Activated T-helper 2 cell treated with anti-CD3 and anti-CD28 coated beads, Interferon-gamma antibody, Interleukin-2, Interleukin-4, amounts not matched to agents 10 μg/mL and 5 μg/mL and 100 μg/mL, durations not matched to agents 14 hours and 24 hours and 36 hours (primary cell): ENCODE measurements at regions of chr19 and their contacts with region 1.

Region 1: DNA sequence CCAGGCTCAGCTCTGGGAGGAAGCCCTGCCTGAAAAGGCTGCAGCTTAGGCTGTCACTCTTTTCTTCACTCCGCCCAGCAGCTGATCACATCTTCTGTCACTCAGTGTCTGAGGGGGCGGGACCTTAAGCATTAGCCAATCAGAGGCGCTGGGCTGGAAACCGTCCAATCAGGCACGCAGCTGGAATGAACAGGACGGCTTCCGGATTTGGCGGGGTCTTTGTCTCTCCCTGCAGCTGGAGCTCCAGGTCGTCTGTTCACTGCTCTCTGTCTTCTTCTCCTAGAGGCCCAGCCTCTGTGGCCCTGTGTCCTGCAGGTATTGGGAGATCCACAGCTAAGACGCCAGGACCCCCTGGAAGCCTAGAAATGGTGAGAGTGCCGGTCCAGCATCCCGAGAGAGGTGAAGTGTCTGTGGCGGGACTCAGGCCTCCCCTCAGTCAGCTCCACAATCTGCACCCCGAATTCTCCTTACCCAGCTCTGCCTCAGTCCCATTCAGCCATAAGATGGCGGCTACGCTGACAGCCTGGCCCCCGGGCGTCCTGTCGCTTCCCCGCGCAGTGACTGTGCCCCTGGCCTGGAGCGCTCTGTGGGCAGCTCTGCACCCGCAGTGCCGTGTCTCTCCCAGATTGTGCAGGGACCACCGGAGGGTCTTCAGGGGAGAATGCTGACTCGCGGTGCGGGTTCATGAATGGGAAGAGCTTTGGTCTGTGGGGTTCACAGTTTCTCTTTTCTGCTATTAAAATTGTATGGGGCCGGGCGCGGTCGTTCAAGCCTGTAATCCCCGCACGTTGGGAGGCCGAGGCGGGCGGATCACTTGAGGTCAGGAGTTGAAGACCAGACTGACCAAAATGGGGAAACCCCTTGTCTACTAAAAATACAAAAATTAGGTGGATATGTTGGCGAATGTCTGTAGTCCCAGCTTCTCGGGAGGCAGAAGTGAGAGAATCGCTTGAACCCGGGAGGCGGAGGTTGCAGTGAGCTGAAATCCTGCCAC is at the start of gene ZNF66:
- DNase-seq: peak; percentile 93
- H3K4me3 Mint-ChIP-seq: peak within 1 kb of the TSS; percentile 94
- H3K27ac Mint-ChIP-seq: peak within 1 kb of the TSS; percentile 93
- H3K4me1 Mint-ChIP-seq: peaks cover 1% of the 10 kb centered on the region
- H3K27me3 Mint-ChIP-seq: no peaks in the 10 kb centered on the region
- total RNA-seq, gene ZNF66: 8.1 and 8.8 TPM in 2 replicates

Region 2: DNA sequence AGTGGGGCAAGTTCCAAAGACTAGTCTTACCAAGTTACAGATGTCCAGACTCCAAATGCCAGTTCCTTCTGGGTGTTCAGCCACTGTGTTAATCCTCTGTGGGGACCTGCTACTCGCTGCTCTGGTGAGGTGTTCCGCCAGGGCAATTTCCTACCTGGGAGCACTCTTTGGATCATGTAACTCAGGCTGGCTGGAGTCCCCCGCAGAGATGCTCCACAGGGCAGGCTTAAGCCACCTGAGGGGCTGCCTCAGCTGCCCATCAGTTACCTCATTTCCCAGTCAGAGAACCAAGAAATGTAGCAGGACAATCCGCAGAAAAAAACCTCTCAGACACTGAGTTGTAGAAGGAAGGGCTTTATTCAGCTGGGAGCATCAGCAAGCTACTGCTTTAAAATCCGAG is 344.6 kb before region 1 on chr19:
- intact Hi-C with region 1: no loop called
- DNase-seq: no peak
- H3K4me3 Mint-ChIP-seq: no peak overlapping the region
- H3K27ac Mint-ChIP-seq: no peak overlapping the region
- H3K4me1 Mint-ChIP-seq: no peaks in the 10 kb centered on the region
- H3K27me3 Mint-ChIP-seq: no peaks in the 10 kb centered on the region

Region 3: GRCh38 chr19:20661150-20661819 is 115.1 kb before region 1 on chr19 and contains the start of gene ZNF626:
- intact Hi-C with region 1: loop called (anchors 2 kb)
- DNase-seq: peak; percentile 68
- H3K4me3 Mint-ChIP-seq: peak within 1 kb of the TSS; percentile 84
- H3K27ac Mint-ChIP-seq: peak within 1 kb of the TSS; percentile 79
- H3K4me1 Mint-ChIP-seq: no peaks in the 10 kb centered on the region
- H3K27me3 Mint-ChIP-seq: no peaks in the 10 kb centered on the region
- total RNA-seq, gene ZNF626: 1.3 and 2.1 TPM in 2 replicates

Region 4: DNA sequence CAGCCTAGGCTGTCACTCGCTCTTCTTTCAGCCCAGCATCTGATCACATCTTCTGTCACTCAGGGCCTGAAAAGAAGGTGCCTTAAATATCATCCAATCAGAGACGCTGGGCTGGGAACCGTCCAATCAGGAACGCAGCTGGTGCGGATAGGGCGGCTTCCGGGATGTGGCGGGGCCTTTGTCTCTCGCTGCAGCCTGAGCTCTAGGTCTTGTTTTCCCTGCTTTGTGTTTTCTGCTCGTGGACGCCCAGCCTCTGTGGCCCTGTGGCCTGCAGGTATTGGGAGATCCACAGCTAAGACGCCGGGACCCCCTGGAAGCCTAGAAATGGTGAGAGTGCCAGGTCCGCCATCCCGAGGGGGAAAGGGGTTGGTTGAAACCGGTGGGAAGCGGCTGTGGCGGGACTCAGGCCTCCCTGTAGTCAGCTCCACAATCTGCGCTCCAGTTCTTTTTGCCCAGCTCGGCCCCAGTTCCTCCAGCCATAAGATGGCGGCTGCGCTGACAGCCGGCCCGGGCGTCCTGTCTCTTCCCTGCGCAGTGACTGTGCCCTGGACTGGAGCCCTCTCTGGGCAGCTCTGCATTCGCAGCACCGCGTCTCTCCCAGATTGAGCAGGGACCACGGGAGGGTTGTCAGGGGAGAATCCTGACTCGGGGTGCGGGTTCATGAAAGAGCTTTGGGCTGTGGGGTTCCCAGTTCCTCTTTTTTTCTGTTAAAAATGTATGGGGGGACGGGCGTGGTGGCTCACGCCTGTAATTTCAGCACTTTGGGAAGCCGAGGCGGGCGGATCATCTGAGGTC is 146.9 kb after region 1 on chr19 and contains the start of gene ZNF85:
- intact Hi-C with region 1: loop called (anchors 2 kb)
- DNase-seq: peak; percentile 87
- H3K4me3 Mint-ChIP-seq: peak within 1 kb of the TSS; percentile 95
- H3K27ac Mint-ChIP-seq: peak within 1 kb of the TSS; percentile 96
- H3K4me1 Mint-ChIP-seq: peaks cover 6% of the 10 kb centered on the region
- H3K27me3 Mint-ChIP-seq: no peaks in the 10 kb centered on the region
- total RNA-seq, gene ZNF85: 8.2 and 10.1 TPM in 2 replicates

Region 5: DNA sequence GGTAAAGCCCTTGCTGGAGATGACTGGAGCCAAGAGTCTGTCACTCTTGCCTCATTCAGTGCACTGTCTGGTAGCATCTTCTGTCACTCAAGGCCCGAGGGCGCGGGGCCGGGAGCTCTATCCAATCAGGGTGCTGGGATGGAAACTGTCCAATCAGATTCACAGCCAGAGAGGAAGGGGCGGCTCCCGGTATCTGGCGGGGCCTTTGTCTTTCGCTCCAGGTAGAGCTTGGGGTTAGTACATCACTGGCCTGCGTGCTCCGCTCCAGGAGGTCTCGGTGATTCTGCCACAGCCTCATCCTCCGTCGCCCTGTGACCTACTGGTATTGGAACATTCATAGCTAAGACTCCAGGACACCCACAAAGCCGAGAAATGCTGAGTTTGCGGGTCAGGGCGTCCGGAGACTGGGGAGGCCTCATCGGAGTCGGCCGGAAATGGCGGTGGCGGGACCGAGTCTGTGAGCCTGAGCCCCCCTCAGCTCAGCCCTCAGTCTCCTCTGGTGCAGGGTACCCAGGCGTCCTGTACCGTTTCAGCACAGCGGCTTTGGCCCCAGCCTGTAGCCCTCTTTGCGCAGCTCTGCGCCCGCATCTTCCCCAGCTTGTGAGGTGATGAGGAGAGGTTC is 223.5 kb after region 1 on chr19:
- intact Hi-C with region 1: loop called (anchors 1 kb)
- DNase-seq: peak; percentile 81
- H3K4me3 Mint-ChIP-seq: peak overlapping the region; percentile 89
- H3K27ac Mint-ChIP-seq: peak overlapping the region; percentile 76
- H3K4me1 Mint-ChIP-seq: peaks cover 8% of the 10 kb centered on the region
- H3K27me3 Mint-ChIP-seq: no peaks in the 10 kb centered on the region

Region 6: DNA sequence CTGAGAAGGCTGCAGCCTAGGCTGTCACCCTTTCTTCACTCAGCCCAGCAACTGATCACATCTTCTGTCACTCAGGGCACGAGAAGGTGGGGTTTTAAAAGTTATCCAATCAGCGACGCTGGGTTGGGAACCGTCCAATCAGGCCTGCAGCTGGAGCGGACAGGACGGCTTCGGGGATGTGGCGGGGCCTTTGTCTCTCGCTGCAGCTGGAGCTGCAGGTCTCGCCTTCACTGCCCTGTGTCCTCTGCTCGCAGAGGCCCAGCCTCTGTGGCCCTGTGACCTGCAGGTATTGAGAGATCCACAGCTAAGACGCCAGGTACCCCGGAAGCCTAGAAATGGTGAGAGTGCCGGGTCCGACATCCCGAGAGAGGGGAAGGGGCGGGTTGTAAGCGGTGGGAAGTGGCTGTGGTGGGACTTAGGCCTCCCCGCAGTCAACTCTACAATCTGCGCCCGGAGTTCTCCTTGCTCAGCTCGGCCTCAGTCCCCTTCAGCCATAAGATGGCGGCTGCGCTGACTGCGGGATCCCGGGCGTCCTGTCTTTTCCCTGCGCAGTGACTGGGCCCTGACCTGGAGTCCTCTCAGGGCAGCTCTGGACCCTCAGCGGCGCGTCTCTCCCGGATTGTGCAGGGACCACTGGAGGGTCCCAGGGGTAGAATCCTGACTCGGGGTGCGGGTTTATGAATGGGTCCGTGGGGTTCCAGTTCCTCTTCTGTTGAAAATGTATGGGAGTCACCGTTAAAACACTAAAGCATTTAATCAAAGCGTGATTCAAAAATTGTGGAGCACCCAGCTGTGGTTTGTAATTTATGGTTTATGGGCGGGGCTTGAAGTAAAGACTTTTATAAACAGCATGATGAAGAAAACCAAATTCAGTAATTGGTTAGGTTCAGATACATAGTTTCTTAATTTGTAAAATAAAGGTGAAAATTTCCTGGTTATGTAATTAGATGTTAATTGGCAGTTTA is 305.9 kb after region 1 on chr19 and contains the start of gene ZNF714:
- intact Hi-C with region 1: loop called (anchors 1 kb)
- DNase-seq: peak; percentile 86
- H3K4me3 Mint-ChIP-seq: peak within 1 kb of the TSS; percentile 97
- H3K27ac Mint-ChIP-seq: peak within 1 kb of the TSS; percentile 97
- H3K4me1 Mint-ChIP-seq: peaks cover 27% of the 10 kb centered on the region
- H3K27me3 Mint-ChIP-seq: no peaks in the 10 kb centered on the region
- total RNA-seq, gene ZNF714: 20.1 and 21.4 TPM in 2 replicates

Region 7: DNA sequence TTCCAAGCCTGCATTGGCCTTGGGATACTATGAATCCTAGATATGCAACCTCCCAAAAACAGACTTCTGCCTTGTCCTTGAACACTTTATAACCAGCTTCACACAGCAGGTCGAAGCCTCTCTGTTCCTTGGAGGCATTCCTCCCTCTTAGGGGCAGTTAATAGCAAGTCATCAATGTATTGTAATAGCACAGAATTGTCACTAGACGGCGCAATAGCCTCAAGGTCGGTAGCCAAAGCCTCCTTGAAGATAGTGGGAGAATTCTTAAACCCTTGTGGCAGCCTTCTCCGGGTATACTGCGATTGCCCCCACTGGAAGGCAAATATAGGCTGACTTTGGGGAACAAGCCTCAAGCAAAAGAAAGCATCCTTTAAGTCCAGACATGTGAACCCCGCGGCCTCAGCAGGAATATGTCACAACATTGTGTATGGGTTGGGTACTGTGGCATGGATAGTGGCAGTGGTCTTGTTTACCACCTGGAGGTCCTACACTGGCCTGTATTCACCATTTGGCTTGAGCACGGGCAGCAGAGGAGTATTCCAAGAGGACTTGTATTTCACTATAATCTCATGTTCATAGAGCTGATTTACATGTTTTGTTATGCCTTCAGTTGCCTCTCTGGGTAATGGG is 426.6 kb after region 1 on chr19:
- intact Hi-C with region 1: no loop called
- DNase-seq: no peak
- H3K4me3 Mint-ChIP-seq: no peak overlapping the region
- H3K27ac Mint-ChIP-seq: no peak overlapping the region
- H3K4me1 Mint-ChIP-seq: no peaks in the 10 kb centered on the region
- H3K27me3 Mint-ChIP-seq: no peaks in the 10 kb centered on the region

Region 8: GRCh38 chr19:21396893-21397572 is 620.7 kb after region 1 on chr19 and contains the start of gene ZNF493:
- intact Hi-C with region 1: loop called (anchors 2 kb)
- DNase-seq: peak; percentile 88
- H3K4me3 Mint-ChIP-seq: peak within 1 kb of the TSS; percentile 98
- H3K27ac Mint-ChIP-seq: peak within 1 kb of the TSS; percentile 85
- H3K4me1 Mint-ChIP-seq: peaks cover 14% of the 10 kb centered on the region
- H3K27me3 Mint-ChIP-seq: no peaks in the 10 kb centered on the region
- total RNA-seq, gene ZNF493: 10.5 and 11.1 TPM in 2 replicates

Region 9: DNA sequence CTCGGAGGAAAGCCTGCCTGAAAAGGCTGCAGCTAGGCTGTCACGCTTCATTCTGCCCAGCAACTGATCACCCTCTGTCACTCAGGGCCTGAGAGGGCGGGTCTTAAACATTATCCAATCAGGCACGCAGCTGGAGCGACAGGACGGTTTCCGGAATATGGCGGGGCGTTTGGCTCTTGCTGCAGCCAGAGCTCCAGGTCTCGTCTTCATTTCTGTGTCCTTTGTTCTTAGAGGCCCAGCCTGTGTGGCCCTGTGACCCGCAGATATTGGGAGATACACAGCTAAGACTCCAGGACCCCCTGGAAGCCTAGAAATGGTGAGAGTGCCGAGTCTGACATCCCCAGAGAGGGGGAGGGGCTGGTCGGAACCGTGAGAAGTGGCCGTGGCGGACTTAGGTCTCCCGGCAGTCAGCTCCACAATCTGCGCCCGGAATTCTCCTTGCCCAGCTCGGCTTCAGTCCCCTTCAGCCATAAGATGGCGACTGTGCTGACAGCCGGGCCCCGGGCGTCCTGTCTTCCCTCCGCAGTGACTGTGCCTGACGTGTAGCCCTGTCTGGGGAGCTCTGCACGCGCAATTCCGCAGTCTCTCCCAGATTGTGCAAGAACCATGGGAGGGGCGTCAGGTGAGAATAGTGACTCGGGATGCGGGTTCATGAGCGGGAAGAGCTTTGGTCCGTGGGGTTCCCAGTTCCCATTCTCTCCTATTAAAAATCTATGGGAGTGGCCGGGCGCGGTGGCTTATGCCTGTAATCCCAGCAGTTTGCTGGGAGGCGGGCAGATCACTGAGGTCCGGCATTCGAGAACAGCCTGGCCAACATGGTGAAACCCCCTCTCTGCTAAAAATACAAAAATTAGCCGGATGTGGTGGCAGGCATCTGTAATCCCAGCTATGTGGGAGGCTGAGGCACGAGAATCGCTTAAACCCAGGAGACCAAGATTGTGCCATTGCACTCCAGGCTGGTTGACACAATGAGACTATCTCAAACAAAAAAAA is 729.4 kb after region 1 on chr19 and contains the start of gene ZNF429:
- intact Hi-C with region 1: loop called (anchors 5 kb)
- DNase-seq: peak; percentile 86
- H3K4me3 Mint-ChIP-seq: peak within 1 kb of the TSS; percentile 100
- H3K27ac Mint-ChIP-seq: peak within 1 kb of the TSS; percentile 95
- H3K4me1 Mint-ChIP-seq: peaks cover 12% of the 10 kb centered on the region
- H3K27me3 Mint-ChIP-seq: no peaks in the 10 kb centered on the region
- total RNA-seq, gene ZNF429: 3.1 and 5.0 TPM in 2 replicates